Common myeloid progenitor, CD34-positive (primary cell): ENCODE measurements at regions of chr16 and their contacts with region 1.

Region 1: GRCh38 chr16:67464565-67464964 is 16.4 kb downstream of the ATP6V0D1 start:
- DNase-seq: no peak
- H3K4me3 ChIP-seq: no peak overlapping the region
- H3K27ac ChIP-seq: no peak overlapping the region
- H3K4me1 ChIP-seq: peaks cover 0 to 6% (median 6%) of the 10 kb centered on the region in 4 experiments
- H3K27me3 ChIP-seq: no peaks in the 10 kb centered on the region

Region 2: GRCh38 chr16:67260426-67261075 is 204.0 kb before region 1 on chr16:
- CTCF ChIA-PET with region 1: interaction called, 10 read pairs
- POLR2A ChIA-PET with region 1: no interaction called
- DNase-seq: peak; percentile 63 to 83 (median 80)
- H3K4me3 ChIP-seq: no peak overlapping the region
- H3K27ac ChIP-seq: no peak overlapping the region
- H3K4me1 ChIP-seq: peaks cover 0 to 3% (median 0%) of the 10 kb centered on the region in 4 experiments
- H3K27me3 ChIP-seq: peaks cover 0 to 3% (median 0%) of the 10 kb centered on the region in 5 experiments

Region 3: DNA sequence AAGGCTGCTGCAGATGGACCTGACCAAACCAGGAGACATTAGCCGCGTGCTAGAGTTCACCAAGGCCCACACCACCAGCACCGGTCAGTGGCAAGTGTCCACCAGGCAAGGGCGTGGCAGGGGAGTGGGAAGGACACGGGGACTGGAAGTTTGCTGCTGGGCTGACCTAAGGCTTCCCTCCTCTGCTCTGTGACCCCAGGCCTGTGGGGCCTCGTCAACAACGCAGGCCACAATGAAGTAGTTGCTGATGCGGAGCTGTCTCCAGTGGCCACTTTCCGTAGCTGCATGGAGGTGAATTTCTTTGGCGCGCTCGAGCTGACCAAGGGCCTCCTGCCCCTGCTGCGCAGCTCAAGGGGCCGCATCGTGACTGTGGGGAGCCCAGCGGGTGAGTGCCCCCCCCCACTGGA is 28.8 kb before region 1 on chr16:
- CTCF ChIA-PET with region 1: interaction called, 17 read pairs
- POLR2A ChIA-PET with region 1: no interaction called
- DNase-seq: no peak
- H3K4me3 ChIP-seq: no peak overlapping the region
- H3K27ac ChIP-seq: no peak overlapping the region
- H3K4me1 ChIP-seq: peaks cover 0 to 11% (median 9%) of the 10 kb centered on the region in 4 experiments
- H3K27me3 ChIP-seq: peaks cover 0 to 21% (median 5%) of the 10 kb centered on the region in 5 experiments

Region 4: DNA sequence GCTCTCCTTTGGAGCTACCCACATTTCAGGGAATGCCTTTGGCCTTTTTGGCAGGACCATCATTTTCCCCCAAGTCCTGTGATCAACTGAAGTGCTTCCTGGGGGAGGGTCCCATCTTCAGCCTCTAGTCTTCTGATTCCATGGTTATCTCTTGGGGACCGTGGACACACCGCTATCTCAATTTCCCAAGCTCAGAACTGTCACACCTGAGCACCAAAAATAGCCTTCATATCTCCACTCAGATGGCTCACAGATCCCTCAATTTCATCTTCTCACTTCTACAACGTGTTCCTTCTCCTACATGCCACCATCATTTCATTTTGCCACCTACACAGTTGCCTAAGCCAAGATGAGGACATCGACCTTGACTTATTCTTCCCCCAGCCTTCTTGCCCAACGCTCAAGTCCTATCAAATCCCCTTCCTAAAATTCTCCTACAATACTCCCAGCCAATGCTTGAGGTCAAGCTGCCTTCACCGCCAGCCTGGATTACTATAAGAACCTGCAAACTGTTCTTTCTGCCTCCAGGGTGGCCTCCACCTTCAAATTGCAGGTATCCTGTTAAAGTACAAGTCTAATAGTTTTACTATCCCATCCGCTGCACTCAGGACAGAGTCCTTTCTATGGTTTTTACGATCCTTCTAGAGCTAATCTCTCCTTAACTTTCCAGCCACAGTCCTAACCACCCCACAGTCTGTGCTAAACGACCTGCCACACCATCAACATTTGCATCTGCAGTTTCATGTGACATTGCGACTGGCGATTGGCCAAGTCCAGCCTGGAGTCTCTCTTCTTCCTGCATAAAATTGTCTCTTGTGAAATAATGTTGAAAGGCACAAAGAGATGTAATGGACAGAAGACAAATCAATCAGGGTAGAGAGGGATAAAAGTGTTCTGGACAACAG is 10.2 kb after region 1 on chr16:
- CTCF ChIA-PET with region 1: interaction called, 18 read pairs
- POLR2A ChIA-PET with region 1: no interaction called
- DNase-seq: no peak
- H3K4me3 ChIP-seq: no peak overlapping the region
- H3K27ac ChIP-seq: no peak overlapping the region
- H3K4me1 ChIP-seq: peaks cover 3 to 12% (median 4%) of the 10 kb centered on the region in 4 experiments
- H3K27me3 ChIP-seq: no peaks in the 10 kb centered on the region

Region 5: GRCh38 chr16:67480833-67481560 is 16.4 kb after region 1 on chr16 and contains the start of gene ATP6V0D1:
- CTCF ChIA-PET with region 1: interaction called, 18 read pairs
- POLR2A ChIA-PET with region 1: no interaction called
- DNase-seq: peak; percentile 98 to 99 (median 99)
- H3K4me3 ChIP-seq: peak within 1 kb of the TSS; percentile 74 to 99 (median 89)
- H3K27ac ChIP-seq: peak within 1 kb of the TSS; percentile 94 to 98
- H3K4me1 ChIP-seq: peaks cover 5 to 38% (median 31%) of the 10 kb centered on the region in 4 experiments
- H3K27me3 ChIP-seq: no peaks in the 10 kb centered on the region